Calu3 (cell line): ENCODE measurements at regions of chr6 and their contacts with region 1.

Region 1: DNA sequence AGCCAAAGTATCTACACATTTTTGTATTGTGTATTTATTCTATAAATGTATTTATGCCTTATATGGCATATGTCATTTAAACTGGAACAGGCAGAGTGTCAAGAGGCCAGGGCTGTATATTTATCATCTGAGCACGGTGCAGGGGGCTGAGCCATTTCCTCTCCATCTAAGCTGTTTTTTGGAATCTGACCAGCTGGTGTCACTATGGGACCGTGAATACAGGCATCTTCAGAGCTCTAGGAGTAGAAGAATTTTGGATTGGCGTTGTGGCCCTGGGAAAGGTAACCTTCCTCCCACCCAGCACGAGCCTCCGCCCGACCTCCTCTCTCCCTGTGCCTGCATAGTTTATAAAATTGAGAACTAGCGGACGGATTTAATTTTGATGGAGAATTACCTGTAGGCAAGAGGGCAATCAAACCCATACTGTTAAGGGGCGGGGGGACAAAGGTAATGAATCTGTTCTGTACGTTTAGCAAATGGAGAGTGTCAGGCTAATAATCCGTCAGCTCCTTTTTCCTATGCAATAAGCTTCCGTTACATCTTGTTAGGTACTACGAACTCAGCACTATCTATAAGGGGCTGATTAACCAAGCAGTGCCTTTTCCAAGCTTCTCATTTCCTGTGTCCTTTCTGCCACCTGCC is 29.0 kb upstream of the EEF1E1 start:
- DNase-seq: peak; percentile 64
- H3K4me3 Mint-ChIP-seq: no peak overlapping the region
- H3K27ac Mint-ChIP-seq: no peak overlapping the region
- H3K4me1 Mint-ChIP-seq: peaks cover 15% of the 10 kb centered on the region
- H3K27me3 Mint-ChIP-seq: no peaks in the 10 kb centered on the region
- CTCF ChIP-seq: peak; percentile 43

Region 2: DNA sequence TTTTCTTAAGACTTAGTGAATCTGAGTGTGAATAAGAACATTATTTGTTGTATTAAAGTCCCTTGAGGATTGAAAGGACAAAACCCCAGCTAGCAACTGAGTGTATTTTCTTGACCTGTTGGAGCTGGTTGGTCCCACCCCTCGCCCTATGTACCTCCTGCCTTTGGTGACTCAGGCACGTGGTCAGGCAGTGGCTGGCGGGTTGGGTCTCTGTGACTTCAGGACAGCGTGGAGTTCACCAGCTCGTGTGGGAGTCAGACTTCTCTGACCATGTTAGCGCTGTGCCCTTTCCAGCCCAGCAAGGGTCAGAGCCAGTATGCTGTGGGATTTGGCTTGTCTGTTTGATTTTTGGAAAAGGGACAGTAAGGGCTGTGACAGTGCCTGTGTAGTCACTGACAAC is 912.1 kb before region 1 on chr6:
- CTCF ChIA-PET with region 1: no interaction called
- intact Hi-C with region 1: no loop called
- DNase-seq: no peak
- H3K4me3 Mint-ChIP-seq: no peak overlapping the region
- H3K27ac Mint-ChIP-seq: no peak overlapping the region
- H3K4me1 Mint-ChIP-seq: peaks cover 17% of the 10 kb centered on the region
- H3K27me3 Mint-ChIP-seq: no peaks in the 10 kb centered on the region
- CTCF ChIP-seq: no peak

Region 3: DNA sequence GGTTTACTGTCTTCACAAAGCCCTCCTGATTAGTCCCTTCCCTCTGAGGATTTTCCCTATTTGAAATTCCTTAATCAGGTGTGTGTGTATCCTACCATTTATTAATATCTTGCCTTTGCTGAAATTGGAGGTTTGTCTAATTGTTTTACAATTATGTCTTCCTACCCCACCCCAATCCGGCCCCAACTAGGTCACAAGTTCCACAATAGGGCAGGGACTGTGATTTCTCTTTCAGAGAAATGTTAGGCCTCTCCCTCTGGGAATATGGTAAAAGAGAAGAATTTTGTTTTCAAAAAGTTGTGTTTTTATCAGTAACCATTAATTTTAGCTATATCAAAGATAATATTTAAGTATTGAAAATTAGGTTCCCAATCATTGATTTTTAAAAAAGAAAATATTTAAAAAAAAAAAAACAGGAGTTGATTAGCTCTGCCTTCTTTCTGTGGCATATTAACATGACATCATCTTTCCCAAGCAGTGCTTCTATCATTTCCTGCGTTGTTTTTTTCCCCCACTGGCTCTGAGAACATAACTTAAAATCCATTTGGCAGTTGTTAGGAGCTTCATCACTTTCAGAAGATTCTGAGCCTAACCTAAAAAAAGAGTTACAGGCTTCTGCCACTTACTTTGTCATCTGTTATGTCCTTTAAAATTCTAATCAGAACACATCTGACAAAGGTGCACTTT is 103.3 kb before region 1 on chr6:
- CTCF ChIA-PET with region 1: no interaction called
- intact Hi-C with region 1: no loop called
- DNase-seq: no peak
- H3K4me3 Mint-ChIP-seq: no peak overlapping the region
- H3K27ac Mint-ChIP-seq: no peak overlapping the region
- H3K4me1 Mint-ChIP-seq: no peaks in the 10 kb centered on the region
- H3K27me3 Mint-ChIP-seq: no peaks in the 10 kb centered on the region
- CTCF ChIP-seq: no peak

Region 4: DNA sequence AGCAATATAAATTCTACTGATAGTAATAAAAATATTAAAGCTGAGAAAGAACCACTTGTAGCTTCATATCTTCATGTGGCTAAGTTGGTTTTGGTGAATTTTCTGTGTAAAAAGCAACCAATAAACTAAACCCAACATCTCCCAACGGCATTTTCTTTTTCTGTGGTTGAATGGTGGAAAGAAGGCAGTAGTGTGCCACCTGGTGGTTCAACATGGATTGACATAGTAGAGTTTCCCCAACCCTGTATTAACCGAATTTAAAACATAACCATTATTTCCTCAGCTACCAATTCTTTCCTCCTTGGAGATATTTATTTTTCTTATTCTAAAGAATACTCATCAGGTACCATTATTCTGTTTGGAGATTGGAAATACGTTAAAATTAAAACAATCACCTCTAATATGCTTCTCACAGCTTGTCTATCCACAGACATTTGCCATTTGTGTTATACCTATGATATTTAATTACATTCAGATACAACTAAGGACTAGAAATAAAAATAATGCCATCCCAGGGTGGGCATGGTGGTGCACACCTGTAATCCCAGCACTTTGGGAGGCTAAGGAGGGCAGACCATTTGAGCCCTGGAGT is 88.1 kb after region 1 on chr6:
- CTCF ChIA-PET with region 1: interaction called, 53 read pairs
- intact Hi-C with region 1: loop called (anchors 1 kb)
- DNase-seq: peak; percentile 46
- H3K4me3 Mint-ChIP-seq: no peak overlapping the region
- H3K27ac Mint-ChIP-seq: no peak overlapping the region
- H3K4me1 Mint-ChIP-seq: peaks cover 7% of the 10 kb centered on the region
- H3K27me3 Mint-ChIP-seq: no peaks in the 10 kb centered on the region
- CTCF ChIP-seq: peak; percentile 39